GM10248 (cell line): ENCODE measurements at regions of chr14 and their contacts with region 1.

Region 1: DNA sequence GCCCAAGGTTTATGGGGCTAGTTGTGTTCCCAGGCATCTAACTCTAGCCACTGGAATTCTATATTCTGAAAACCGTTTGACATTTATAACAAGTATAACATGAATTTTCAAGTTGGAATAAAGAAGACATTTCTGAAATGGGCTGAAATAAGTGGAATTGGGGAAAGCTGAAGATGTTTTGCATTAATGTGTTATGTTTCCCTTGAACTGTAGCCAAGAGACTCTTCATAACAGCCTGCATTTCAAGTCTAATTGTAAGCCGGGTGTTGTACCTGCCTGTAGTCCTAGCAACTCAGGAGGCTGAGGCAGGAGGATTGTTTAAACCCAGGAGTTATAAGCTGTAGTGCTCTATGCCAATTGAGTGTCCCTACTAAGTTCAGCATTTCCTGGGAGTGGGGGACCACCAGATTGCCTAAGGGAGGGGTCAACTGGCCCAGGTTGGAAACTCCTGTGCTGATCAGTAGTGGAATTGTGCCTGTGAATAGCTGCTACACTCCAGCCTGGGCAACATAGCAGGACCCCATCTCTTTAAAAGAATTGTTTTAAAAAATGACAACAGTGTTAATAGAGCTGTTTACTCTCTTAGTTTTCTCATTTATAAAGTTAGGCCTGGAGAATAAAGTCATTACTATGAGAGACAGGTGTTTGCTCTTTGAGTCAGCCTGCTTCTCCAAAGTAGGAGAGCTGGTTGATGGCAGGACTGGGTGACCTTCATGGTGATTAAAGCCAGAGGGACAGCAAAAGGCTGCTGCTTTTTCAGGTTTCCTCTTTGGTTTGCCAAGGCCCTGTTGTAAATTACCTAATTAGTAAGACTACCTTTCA is 483.6 kb upstream of the RGS6 start:
- DNase-seq: no peak
- CTCF ChIP-seq: no peak

Region 2: DNA sequence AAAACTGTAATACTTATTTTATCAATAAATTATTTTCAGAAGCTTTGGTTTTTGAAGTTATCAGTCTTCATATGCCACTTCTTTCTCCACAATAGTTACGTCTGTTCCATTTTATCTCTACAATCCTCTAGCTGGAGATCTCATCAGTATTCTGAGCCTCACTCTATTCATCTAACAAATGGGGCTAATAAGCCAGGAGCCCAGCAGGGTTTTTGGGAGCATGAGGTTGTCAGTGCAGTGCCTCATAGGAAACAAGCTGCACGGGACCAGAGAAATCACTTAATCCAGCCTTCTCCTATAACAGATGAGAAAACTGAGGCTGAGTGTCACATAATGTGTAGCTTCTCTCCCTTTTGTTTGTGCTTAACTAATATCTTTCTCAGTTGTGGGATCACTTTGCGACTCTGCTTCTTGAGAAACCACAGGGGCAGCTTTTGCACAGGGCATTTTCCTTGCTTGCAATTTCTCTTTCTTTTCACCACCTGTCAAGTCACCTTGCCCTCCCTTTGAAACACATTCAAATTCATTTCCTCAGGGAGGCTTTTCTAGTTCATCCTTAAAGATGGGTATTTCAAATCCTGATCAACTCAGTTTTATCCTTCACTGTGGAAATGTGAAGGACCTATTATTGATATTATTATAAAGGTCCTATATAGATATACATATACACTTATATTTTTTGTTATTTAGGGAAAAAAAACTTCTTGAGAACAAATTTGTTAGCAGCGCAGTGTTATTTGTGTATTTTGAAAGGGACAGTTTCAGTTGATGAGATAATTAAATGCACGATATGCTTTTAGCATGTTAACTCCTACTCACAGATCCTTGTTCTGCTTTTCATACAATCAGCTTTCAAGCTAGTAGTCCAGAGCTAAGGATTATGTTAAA is 18.1 kb before region 1 on chr14:
- CTCF ChIA-PET with region 1: interaction called, 15 read pairs
- POLR2A ChIA-PET with region 1: no interaction called
- DNase-seq: peak; percentile 37
- CTCF ChIP-seq: no peak